ENCODE measurements at regions of chr9 and their contacts with region 1.

Region 1: DNA sequence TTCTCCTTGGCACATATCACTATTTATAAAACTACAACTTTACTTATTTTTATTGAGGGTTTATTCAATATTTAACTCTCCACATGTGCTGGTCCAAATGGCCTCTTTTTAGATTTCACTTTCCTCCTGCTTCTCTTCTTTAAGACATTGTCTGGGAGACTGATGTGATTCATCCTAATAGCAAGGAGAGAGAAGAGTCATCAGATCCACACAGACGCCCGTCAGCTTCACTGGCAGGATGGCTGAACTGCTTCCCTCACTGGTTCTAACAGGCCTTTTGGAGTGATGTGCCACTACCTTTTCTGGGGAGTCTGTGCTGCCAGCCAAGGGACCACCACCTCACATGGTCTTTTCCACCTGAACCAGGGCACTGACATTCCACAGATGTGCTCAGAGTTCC is 16.5 kb upstream of the ROR2 start:
- DNase-seq: no peak
- H3K4me3 ChIP-seq: no peak overlapping the region
- H3K27ac ChIP-seq: no peak overlapping the region
- H3K4me1 ChIP-seq: no peaks in the 10 kb centered on the region
- H3K27me3 ChIP-seq: no peaks in the 10 kb centered on the region
- CTCF ChIP-seq: no peak
- POLR2A ChIP-seq: no peak

Region 2: DNA sequence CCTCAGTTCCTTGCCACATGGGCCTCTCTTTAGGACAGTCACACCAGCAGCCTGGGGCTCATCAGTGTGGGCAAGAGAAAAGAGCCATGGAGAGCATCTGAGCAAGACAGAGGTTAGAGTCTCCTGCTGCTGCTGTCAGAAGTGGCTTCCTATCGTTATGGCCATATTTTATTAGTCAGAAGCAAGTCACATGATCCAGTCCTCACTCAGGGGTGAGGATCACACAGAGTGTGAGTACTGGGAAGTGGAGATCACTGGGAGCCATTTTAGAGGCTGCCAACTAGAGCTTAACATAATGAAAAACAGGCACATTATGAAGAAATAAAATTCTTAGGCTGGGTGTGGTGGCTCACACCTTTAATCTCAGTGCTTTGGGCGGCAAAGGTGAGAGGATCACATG is 1385.9 kb before region 1 on chr9:
- intact Hi-C with region 1: loop called (anchors 5 kb)
- DNase-seq: no peak
- H3K4me3 ChIP-seq: no peak overlapping the region
- H3K27ac ChIP-seq: no peak overlapping the region
- H3K4me1 ChIP-seq: no peaks in the 10 kb centered on the region
- H3K27me3 ChIP-seq: no peaks in the 10 kb centered on the region
- CTCF ChIP-seq: no peak
- POLR2A ChIP-seq: no peak

Region 3: DNA sequence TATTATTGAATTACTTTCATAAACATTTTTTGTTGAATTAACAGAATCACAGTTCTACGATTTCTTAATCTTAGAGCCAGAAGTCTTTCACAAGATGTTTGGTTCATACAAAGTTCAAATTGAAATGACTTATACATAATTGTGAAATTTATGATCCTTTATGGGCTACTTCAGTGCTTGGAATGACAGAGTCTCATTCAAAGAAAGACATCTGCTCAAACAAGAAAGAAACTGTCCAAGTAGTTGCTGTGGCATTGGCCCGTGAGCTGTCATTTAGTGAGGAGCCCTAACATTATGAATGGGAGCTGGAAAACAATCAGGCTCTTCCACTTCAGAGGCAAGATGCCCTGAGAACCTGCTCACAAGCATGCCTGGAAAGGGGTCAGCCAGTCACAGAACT is 668.2 kb before region 1 on chr9:
- intact Hi-C with region 1: no loop called
- DNase-seq: no peak
- H3K4me3 ChIP-seq: no peak overlapping the region
- H3K27ac ChIP-seq: peak overlapping the region in 1 of 2 donors; percentile 16
- H3K4me1 ChIP-seq: peaks cover 0 to 5% of the 10 kb centered on the region in 2 donors
- H3K27me3 ChIP-seq: no peaks in the 10 kb centered on the region
- CTCF ChIP-seq: no peak
- POLR2A ChIP-seq: no peak

Region 4: DNA sequence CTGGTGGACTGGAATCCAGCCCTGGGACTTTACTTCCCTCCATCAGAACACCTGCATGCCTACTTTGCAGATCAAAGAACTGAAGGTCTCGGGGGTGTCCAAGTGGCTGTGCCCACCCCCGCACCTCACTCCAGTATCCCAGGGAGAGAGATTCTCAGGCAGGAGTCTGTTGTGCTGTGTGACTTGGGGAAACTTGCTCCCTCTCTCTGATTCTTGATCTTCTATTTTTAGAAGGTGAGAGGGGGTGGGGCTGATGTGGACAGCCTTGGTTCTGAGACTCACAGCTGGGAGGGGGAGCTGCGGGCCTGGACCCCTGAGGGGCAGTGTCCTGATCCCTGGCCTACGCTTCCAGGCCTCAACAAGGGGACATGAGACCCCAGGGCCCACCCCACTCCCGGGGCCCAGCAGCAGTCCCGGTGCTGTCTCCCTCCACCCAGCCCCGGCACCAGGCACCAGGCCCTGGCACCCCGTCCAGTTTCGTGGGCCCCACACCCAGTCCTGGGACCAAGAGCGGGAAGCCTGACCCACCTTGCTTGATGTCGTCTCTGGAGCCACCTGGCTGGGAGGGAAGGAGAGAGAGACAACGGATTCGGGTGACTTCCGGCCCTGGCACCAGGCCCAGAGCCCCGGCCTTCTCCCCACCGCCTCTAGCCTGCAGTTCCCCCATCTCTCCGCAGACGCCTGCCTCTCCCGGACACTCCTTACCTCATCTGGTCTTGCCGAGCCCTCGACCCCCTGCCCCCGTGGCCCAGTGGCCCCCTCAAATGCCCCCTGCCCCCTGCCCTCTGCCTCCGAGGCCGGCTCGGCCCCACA is 222.7 kb after region 1 on chr9:
- intact Hi-C with region 1: no loop called
- DNase-seq: no peak
- H3K4me3 ChIP-seq: no peak overlapping the region
- H3K27ac ChIP-seq: no peak overlapping the region
- H3K4me1 ChIP-seq: no peaks in the 10 kb centered on the region
- H3K27me3 ChIP-seq: no peaks in the 10 kb centered on the region
- CTCF ChIP-seq: no peak
- POLR2A ChIP-seq: no peak

Measured in breast epithelium (tissue), 4 donors.